Endothelial cell of umbilical vein (primary cell): ENCODE measurements at regions of chr9 and their contacts with region 1.

Region 1: DNA sequence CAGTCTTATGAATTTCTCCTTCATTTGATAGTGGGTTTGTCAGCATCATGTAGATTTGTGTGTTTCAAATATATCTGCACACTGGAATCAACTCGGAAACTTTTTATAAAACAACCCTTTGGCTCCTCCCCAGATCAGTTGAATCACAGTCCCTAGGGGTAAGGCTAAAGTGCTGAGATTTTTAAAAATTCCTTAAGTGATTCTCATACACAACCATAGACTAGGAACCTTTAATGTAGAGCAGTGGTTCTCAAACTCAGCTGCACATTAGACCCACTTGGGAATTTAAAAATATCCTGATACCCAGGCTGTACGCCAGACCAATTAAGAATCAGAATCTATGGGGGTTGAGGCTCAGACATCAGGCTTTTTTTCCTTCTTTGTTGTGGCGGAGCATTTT is 17.5 kb upstream of the JAK2 start:
- DNase-seq: no peak
- H3K4me3 ChIP-seq: no peak overlapping the region
- H3K27ac ChIP-seq: no peak overlapping the region
- H3K4me1 ChIP-seq: no peaks in the 10 kb centered on the region
- H3K27me3 ChIP-seq: no peaks in the 10 kb centered on the region
- CTCF ChIP-seq: no peak
- POLR2A ChIP-seq: no peak

Region 2: GRCh38 chr9:4614627-4615026 is 352.9 kb before region 1 on chr9:
- CTCF ChIA-PET with region 1: no interaction called
- POLR2A ChIA-PET with region 1: no interaction called
- dilution Hi-C with region 1: no loop called
- intact Hi-C with region 1: no loop called
- DNase-seq: no peak
- H3K4me3 ChIP-seq: no peak overlapping the region
- H3K27ac ChIP-seq: no peak overlapping the region
- H3K4me1 ChIP-seq: peaks cover 4% of the 10 kb centered on the region
- H3K27me3 ChIP-seq: peaks cover 0 to 1% of the 10 kb centered on the region in 2 experiments
- CTCF ChIP-seq: no peak
- POLR2A ChIP-seq: no peak

Region 3: GRCh38 chr9:4939118-4939561 is 28.4 kb before region 1 on chr9:
- CTCF ChIA-PET with region 1: no interaction called
- POLR2A ChIA-PET with region 1: no interaction called
- dilution Hi-C with region 1: no loop called
- intact Hi-C with region 1: loop called (anchors 1 kb)
- DNase-seq: peak; percentile 13
- H3K4me3 ChIP-seq: no peak overlapping the region
- H3K27ac ChIP-seq: no peak overlapping the region
- H3K4me1 ChIP-seq: peaks cover 23% of the 10 kb centered on the region
- H3K27me3 ChIP-seq: no peaks in the 10 kb centered on the region
- CTCF ChIP-seq: no peak
- POLR2A ChIP-seq: no peak

Region 4: DNA sequence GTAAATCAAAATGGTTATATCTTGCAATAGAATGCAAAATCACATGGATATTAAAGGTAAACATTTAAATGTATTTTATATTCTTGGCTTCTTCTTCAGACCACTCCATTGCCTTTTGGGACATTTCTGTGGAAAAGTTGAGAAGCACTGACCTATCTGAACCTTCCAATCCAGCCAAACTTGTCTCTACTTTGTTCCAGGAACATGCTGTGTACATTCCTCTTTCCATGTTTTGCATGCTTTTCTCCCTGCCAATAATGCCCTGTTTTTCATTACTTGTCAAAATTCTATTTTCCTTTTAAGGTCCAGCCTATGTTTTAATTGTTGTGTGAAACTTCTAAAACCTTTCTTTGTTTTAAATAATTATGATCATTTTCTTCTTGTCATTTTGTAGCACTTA is 45.9 kb after region 1 on chr9:
- CTCF ChIA-PET with region 1: no interaction called
- POLR2A ChIA-PET with region 1: no interaction called
- dilution Hi-C with region 1: no loop called
- intact Hi-C with region 1: no loop called
- DNase-seq: no peak
- H3K4me3 ChIP-seq: no peak overlapping the region
- H3K27ac ChIP-seq: no peak overlapping the region
- H3K4me1 ChIP-seq: no peaks in the 10 kb centered on the region
- H3K27me3 ChIP-seq: no peaks in the 10 kb centered on the region
- CTCF ChIP-seq: no peak
- POLR2A ChIP-seq: no peak